Psoas muscle (tissue), 8 donors: ENCODE measurements at regions of chr17 and their contacts with region 1.

Region 1: GRCh38 chr17:81101614-81102306 is 63.5 kb upstream of the PVALEF start:
- DNase-seq: peak; percentile 81 to 91
- ATAC-seq: peak; percentile 90 to 95 (median 92)
- H3K4me3 ChIP-seq: no peak overlapping the region
- H3K27ac ChIP-seq: no peak overlapping the region
- H3K4me1 ChIP-seq: peaks cover 10% of the 10 kb centered on the region
- H3K27me3 ChIP-seq: no peaks in the 10 kb centered on the region
- CTCF ChIP-seq: peak; percentile 100

Region 2: GRCh38 chr17:80991645-80992076 is 110.1 kb before region 1 on chr17 and contains the start of gene CHMP6:
- intact Hi-C with region 1: loop called (anchors 1 to 2 kb)
- DNase-seq: peak; percentile 85 to 90
- ATAC-seq: peak; percentile 75 to 80 (median 78)
- H3K4me3 ChIP-seq: peak within 1 kb of the TSS; percentile 89
- H3K27ac ChIP-seq: peak within 1 kb of the TSS; percentile 85
- H3K4me1 ChIP-seq: peaks cover 17% of the 10 kb centered on the region
- H3K27me3 ChIP-seq: no peaks in the 10 kb centered on the region
- CTCF ChIP-seq: peak; percentile 29
- total RNA-seq, gene CHMP6: 32.0 to 36.9 (median 33.6) TPM

Region 3: GRCh38 chr17:81057079-81057730 is 44.6 kb before region 1 on chr17:
- intact Hi-C with region 1: no loop called
- DNase-seq: peak in 1 of 2 donors; percentile 80
- ATAC-seq: peak; percentile 65 to 95 (median 89)
- H3K4me3 ChIP-seq: peak overlapping the region; percentile 11
- H3K27ac ChIP-seq: peak overlapping the region; percentile 58
- H3K4me1 ChIP-seq: peaks cover 9% of the 10 kb centered on the region
- H3K27me3 ChIP-seq: no peaks in the 10 kb centered on the region
- CTCF ChIP-seq: no peak

Region 4: GRCh38 chr17:81153340-81153803 is 51.6 kb after region 1 on chr17:
- intact Hi-C with region 1: no loop called
- DNase-seq: peak; percentile 29 to 62
- ATAC-seq: peak; percentile 15 to 45 (median 36)
- H3K4me3 ChIP-seq: no peak overlapping the region
- H3K27ac ChIP-seq: no peak overlapping the region
- H3K4me1 ChIP-seq: no peaks in the 10 kb centered on the region
- H3K27me3 ChIP-seq: peaks cover 0 to 6% (median 3%) of the 10 kb centered on the region in 3 donors
- CTCF ChIP-seq: no peak